ENCODE measurements at regions of chr3 and their contacts with region 1.

Region 1: DNA sequence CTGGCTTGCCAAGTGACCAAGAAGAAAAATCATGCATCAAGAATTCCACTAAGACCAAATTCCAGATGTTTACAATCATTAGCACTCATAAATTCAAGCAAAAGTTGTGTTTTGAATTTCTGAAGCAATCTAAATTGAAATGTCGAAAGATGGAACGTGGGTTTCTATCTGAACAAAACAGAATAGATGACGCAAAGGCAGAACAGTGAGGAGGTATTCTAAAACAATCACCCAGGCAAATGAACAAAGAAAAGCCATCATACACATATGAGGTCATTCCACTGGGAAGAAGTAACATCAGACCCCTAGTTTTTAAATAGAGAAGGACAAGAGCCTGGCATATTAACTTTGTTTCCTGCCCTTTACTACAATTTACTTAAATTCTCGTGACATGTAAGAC is 58.0 kb downstream of the MCF2L2 start:
- DNase-seq: peak in 1 of 2 experiments; percentile 40
- H3K4me3 ChIP-seq: no peak overlapping the region
- H3K27ac ChIP-seq: peak overlapping the region; percentile 97
- H3K4me1 ChIP-seq: peaks cover 48% of the 10 kb centered on the region
- H3K27me3 ChIP-seq: no peaks in the 10 kb centered on the region
- CTCF ChIP-seq: no peak

Region 2: GRCh38 chr3:183123891-183124290 is 246.5 kb before region 1 on chr3:
- CTCF ChIA-PET with region 1: no interaction called
- POLR2A ChIA-PET with region 1: no interaction called
- intact Hi-C with region 1: no loop called
- DNase-seq: peak in 1 of 2 experiments; percentile 75
- H3K4me3 ChIP-seq: no peak overlapping the region
- H3K27ac ChIP-seq: no peak overlapping the region; the same call in 1 of the 2 replicates
- H3K4me1 ChIP-seq: peaks cover 22% of the 10 kb centered on the region
- H3K27me3 ChIP-seq: no peaks in the 10 kb centered on the region
- CTCF ChIP-seq: no peak

Region 3: DNA sequence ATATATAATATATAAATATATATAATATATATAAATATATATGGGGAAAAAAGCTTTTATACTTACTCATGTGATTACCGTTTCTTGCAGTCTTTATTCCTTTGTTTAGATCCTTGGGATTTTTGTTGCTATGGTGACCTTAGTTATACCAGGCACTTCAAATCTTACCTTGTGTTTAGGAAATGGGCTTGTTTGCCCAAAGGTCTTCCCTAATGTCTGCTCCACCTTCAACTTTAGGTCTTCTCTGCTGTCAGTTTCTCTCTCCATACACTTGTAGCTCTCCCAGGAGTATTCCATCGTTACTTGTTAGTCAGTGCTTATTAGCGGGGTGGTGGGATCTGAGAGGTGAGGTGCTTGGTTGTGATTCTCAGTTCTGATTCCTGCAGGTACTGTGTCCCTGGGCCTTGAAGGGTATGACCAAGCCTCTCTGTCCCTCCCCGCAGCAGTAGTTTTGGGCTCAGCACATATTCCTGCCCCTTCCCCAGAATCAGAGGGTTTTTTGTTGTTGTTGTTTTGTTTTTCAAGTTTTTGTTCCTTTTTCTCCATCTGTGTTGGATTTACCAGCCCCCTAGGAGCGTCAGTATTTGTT is 198.2 kb before region 1 on chr3:
- CTCF ChIA-PET with region 1: no interaction called
- POLR2A ChIA-PET with region 1: no interaction called
- intact Hi-C with region 1: no loop called
- DNase-seq: peak in 1 of 2 experiments; percentile 6
- H3K4me3 ChIP-seq: no peak overlapping the region
- H3K27ac ChIP-seq: no peak overlapping the region
- H3K4me1 ChIP-seq: no peaks in the 10 kb centered on the region
- H3K27me3 ChIP-seq: no peaks in the 10 kb centered on the region
- CTCF ChIP-seq: no peak

Region 4: DNA sequence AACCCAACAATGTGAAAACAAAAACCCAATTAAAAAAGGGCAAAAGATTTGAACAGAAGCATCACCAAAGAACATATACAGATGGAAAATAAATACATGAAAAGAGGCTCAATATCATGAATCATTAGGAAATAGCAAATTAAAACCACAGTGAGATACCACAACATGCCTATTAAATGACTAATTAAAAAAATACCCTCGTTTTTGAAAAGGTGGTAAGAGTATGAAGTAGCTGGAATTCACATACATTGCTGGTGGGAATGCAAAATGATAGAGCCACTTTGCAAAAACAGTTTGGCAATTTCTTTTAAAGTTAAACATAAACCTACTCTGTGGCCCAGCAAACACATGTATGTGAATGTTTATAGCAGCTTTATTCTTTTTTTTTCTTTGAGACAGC is 41.6 kb before region 1 on chr3:
- CTCF ChIA-PET with region 1: no interaction called
- POLR2A ChIA-PET with region 1: no interaction called
- intact Hi-C with region 1: no loop called
- DNase-seq: peak in 1 of 2 experiments; percentile 83
- H3K4me3 ChIP-seq: no peak overlapping the region
- H3K27ac ChIP-seq: peak overlapping the region; percentile 32
- H3K4me1 ChIP-seq: peaks cover 24% of the 10 kb centered on the region
- H3K27me3 ChIP-seq: no peaks in the 10 kb centered on the region
- CTCF ChIP-seq: no peak

Region 5: GRCh38 chr3:184399410-184399809 is 1029.0 kb after region 1 on chr3:
- CTCF ChIA-PET with region 1: no interaction called
- POLR2A ChIA-PET with region 1: interaction called, 14 read pairs
- intact Hi-C with region 1: no loop called
- DNase-seq: no peak
- H3K4me3 ChIP-seq: no peak overlapping the region
- H3K27ac ChIP-seq: no peak overlapping the region
- H3K4me1 ChIP-seq: no peaks in the 10 kb centered on the region
- H3K27me3 ChIP-seq: peaks cover 91% of the 10 kb centered on the region
- CTCF ChIP-seq: no peak

Measured in PC-9 (cell line).